ENCODE measurements at regions of chr12 and their contacts with region 1.

Region 1: GRCh38 chr12:4538207-4539160 is at the start of gene RAD51AP1:
- DNase-seq: peak; percentile 98
- H3K4me3 ChIP-seq: peak within 1 kb of the TSS; percentile 88
- H3K27ac ChIP-seq: peak within 1 kb of the TSS; percentile 98
- H3K4me1 ChIP-seq: peaks cover 15% of the 10 kb centered on the region
- H3K27me3 ChIP-seq: no peaks in the 10 kb centered on the region
- CTCF ChIP-seq: no peak
- total RNA-seq, gene RAD51AP1: 58.9 and 62.5 TPM in 2 replicates

Region 2: DNA sequence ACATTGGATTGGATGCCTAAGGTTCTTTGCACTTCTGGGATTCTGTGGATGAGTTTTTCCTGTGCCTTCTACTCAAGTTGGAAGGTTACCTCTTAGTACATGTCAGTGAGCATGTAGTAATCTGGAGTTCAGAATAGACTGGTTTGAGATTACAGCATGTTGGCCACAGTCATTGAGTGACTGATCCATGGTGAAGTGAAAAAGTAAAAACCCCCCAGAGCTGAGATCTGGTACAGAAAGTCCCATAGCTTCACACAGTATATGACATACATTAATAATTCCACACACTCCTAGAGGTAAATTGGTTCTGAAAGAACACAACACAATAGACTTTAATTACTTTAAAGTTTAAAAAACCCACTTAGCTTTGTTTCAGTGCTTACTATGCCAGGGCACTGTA is 276.8 kb before region 1 on chr12:
- CTCF ChIA-PET with region 1: no interaction called
- POLR2A ChIA-PET with region 1: no interaction called
- intact Hi-C with region 1: no loop called
- DNase-seq: no peak
- H3K4me3 ChIP-seq: no peak overlapping the region
- H3K27ac ChIP-seq: no peak overlapping the region
- H3K4me1 ChIP-seq: no peaks in the 10 kb centered on the region
- H3K27me3 ChIP-seq: peaks cover 87% of the 10 kb centered on the region
- CTCF ChIP-seq: no peak

Region 3: GRCh38 chr12:4555804-4556203 is 17.3 kb after region 1 on chr12:
- CTCF ChIA-PET with region 1: no interaction called
- POLR2A ChIA-PET with region 1: interaction called, 16 read pairs
- intact Hi-C with region 1: no loop called
- DNase-seq: no peak
- H3K4me3 ChIP-seq: no peak overlapping the region
- H3K27ac ChIP-seq: no peak overlapping the region
- H3K4me1 ChIP-seq: no peaks in the 10 kb centered on the region
- H3K27me3 ChIP-seq: no peaks in the 10 kb centered on the region
- CTCF ChIP-seq: no peak